A673 (cell line): ENCODE measurements at regions of chr5 and their contacts with region 1.

Region 1: DNA sequence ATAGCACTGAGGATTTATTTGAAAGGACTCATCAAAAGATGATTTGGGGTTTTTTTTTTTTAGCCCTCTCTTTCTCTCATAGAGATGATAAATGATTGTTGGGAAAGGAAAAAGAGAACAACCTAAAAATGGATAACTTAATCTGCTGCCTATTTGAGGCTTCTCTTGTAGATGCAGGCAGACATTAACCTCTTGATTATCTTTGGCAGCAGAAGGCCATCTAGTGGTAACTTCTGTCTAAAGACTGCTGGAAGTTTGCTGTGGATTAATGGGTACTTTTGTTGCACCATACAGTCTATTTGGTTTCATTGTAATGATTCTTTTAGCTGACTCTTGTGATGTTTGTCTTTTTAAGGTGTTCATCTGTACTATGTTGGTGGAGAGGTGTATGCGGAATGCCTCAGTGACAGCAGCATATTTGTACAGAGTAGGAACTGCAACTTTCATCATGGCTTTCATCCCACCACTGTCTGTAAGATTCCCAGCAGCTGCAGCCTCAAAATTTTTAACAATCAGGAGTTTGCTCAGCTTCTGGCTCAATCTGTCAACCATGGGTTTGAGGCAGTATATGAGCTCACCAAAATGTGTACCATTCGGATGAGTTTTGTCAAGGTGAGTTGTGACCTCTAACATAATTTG is 18.8 kb downstream of the SMIM32 start:
- DNase-seq: peak; percentile 63
- H3K4me3 ChIP-seq: no peak overlapping the region
- H3K27ac ChIP-seq: no peak overlapping the region
- H3K4me1 ChIP-seq: no peaks in the 10 kb centered on the region
- H3K27me3 ChIP-seq: no peaks in the 10 kb centered on the region
- CTCF ChIP-seq: peak; percentile 68

Region 2: GRCh38 chr5:135930029-135930948 is 243.9 kb before region 1 on chr5:
- CTCF ChIA-PET with region 1: no interaction called
- POLR2A ChIA-PET with region 1: no interaction called
- intact Hi-C with region 1: no loop called
- DNase-seq: peak; percentile 22
- H3K4me3 ChIP-seq: peak overlapping the region; percentile 35
- H3K27ac ChIP-seq: no peak overlapping the region
- H3K4me1 ChIP-seq: no peaks in the 10 kb centered on the region
- H3K27me3 ChIP-seq: peaks cover 90% of the 10 kb centered on the region
- CTCF ChIP-seq: 0 out of 2 replicates have a peak, but pooled peaks have one; percentile 8

Region 3: GRCh38 chr5:136062366-136063274 is 111.5 kb before region 1 on chr5:
- CTCF ChIA-PET with region 1: no interaction called
- POLR2A ChIA-PET with region 1: no interaction called
- intact Hi-C with region 1: loop called (anchors 5 kb)
- DNase-seq: peak; percentile 63
- H3K4me3 ChIP-seq: no peak overlapping the region
- H3K27ac ChIP-seq: no peak overlapping the region
- H3K4me1 ChIP-seq: no peaks in the 10 kb centered on the region
- H3K27me3 ChIP-seq: no peaks in the 10 kb centered on the region
- CTCF ChIP-seq: peak; percentile 59

Region 4: GRCh38 chr5:136202469-136203205 is 28.5 kb after region 1 on chr5:
- CTCF ChIA-PET with region 1: no interaction called
- POLR2A ChIA-PET with region 1: no interaction called
- intact Hi-C with region 1: no loop called
- DNase-seq: no peak
- H3K4me3 ChIP-seq: no peak overlapping the region
- H3K27ac ChIP-seq: no peak overlapping the region
- H3K4me1 ChIP-seq: no peaks in the 10 kb centered on the region
- H3K27me3 ChIP-seq: peaks cover 25% of the 10 kb centered on the region
- CTCF ChIP-seq: no peak